ENCODE measurements at regions of chr11 and their contacts with region 1.

Region 1: GRCh38 chr11:95923728-95924413 is at the start of gene MTMR2:
- DNase-seq: peak; percentile 82
- H3K4me3 ChIP-seq: peak within 1 kb of the TSS; percentile 72
- H3K27ac ChIP-seq: peak within 1 kb of the TSS; percentile 90
- H3K4me1 ChIP-seq: no peaks in the 10 kb centered on the region
- H3K27me3 ChIP-seq: no peaks in the 10 kb centered on the region
- CTCF ChIP-seq: no peak
- total RNA-seq, gene MTMR2: 29.3 to 34.3 TPM

Region 2: DNA sequence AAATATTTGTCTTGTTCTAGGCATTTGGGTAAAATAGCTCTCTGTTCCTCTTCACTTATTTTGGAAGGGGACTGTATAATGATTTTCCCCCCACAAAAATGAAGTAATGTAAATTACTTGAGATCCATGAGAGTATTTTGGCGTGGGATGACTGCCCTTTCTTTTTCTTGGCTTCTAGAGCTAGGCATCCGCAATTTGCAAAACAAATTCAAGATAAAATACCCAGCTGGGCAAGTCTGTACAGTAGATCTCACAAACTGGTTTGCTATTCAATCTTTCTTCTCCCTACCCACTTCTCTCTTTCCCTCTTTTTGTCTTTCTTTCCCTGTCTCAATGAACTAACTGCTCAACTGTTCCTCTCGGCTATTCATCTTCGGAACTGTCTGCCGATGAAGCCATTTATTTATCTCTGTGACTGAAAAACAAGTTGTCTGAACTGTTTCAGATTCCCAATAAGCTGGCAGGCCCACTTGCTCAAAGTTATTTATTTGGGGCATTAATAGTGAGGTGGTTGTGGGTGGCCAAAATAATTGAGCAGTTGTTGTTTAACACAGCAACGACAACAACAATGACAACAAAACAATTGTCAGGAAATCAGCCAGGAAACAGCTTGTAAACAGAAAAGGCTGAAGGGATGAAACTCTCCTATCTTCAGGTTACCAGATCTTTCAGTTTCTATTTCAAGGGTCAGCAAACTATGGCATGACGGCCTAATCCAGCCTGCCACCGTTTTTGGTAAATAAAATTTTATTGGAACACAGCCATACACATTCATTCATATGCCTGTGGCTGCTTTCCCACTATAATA is 75.9 kb after region 1 on chr11:
- intact Hi-C with region 1: loop called (anchors 10 kb)
- DNase-seq: no peak
- H3K4me3 ChIP-seq: no peak overlapping the region
- H3K27ac ChIP-seq: no peak overlapping the region
- H3K4me1 ChIP-seq: no peaks in the 10 kb centered on the region
- H3K27me3 ChIP-seq: no peaks in the 10 kb centered on the region
- CTCF ChIP-seq: no peak

Region 3: GRCh38 chr11:96389720-96390487 is 466.0 kb after region 1 on chr11 and contains the starts of genes CCDC82 and JRKL:
- intact Hi-C with region 1: loop called (anchors 10 kb)
- DNase-seq: peak; percentile 99
- H3K4me3 ChIP-seq: peak within 1 kb of the TSS; percentile 85
- H3K27ac ChIP-seq: peak within 1 kb of the TSS; percentile 86
- H3K4me1 ChIP-seq: no peaks in the 10 kb centered on the region
- H3K27me3 ChIP-seq: no peaks in the 10 kb centered on the region
- CTCF ChIP-seq: no peak
- total RNA-seq, gene CCDC82: 11.6 to 20.4 TPM
- total RNA-seq, gene JRKL: 8.0 to 10.9 TPM

Measured in colonic mucosa (tissue), 4 donors.